AG04450 (cell line): ENCODE measurements at regions of chr5 and their contacts with region 1.

Region 1: GRCh38 chr5:126339215-126339805 is 83.9 kb upstream of the GRAMD2B start:
- DNase-seq: peak; percentile 30
- H3K4me3 ChIP-seq: no peak overlapping the region
- H3K27ac ChIP-seq: no peak overlapping the region
- H3K27me3 ChIP-seq: peaks cover 2% of the 10 kb centered on the region
- CTCF ChIP-seq: peak; percentile 79

Region 2: GRCh38 chr5:126354012-126354857 is 14.9 kb after region 1 on chr5:
- CTCF ChIA-PET with region 1: interaction called, 34 read pairs
- POLR2A ChIA-PET with region 1: no interaction called
- DNase-seq: peak; percentile 88
- H3K4me3 ChIP-seq: peak overlapping the region; percentile 44
- H3K27ac ChIP-seq: peak overlapping the region; percentile 57
- H3K27me3 ChIP-seq: no peaks in the 10 kb centered on the region
- CTCF ChIP-seq: peak; percentile 46

Region 3: DNA sequence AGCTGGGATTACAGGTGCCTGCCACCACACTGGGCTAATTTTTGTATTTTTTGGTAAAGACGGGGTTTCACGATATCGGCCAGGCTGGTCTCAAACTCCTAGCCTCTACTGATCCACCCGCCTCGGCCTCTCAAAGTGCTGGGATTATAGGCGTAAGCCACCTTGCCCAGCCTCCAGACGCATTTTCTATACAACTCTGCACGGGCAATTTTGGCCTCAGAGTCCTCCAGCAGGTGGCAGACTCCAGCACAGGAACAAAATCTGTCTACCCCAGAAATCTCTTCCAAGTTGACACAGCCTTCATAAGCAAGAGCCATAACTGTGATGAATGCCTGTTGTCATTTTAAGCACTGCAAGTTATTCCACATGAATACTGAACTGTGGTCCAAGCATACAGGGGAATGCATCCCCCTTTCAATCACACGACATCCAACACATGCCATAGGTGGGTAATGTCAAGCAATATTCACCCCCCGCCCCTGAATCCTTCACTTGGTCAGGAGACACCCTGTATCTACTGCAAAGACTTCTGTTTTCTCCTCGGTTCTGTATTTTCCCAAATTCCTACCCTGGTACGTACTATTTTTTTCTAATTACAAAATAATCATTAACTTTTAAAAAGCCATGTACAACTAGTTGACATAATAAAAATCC is 204.9 kb after region 1 on chr5:
- CTCF ChIA-PET with region 1: interaction called, 200 read pairs
- POLR2A ChIA-PET with region 1: interaction called, 10 read pairs
- DNase-seq: no peak
- H3K4me3 ChIP-seq: no peak overlapping the region
- H3K27ac ChIP-seq: no peak overlapping the region
- H3K27me3 ChIP-seq: no peaks in the 10 kb centered on the region
- CTCF ChIP-seq: peak; percentile 60

Region 4: DNA sequence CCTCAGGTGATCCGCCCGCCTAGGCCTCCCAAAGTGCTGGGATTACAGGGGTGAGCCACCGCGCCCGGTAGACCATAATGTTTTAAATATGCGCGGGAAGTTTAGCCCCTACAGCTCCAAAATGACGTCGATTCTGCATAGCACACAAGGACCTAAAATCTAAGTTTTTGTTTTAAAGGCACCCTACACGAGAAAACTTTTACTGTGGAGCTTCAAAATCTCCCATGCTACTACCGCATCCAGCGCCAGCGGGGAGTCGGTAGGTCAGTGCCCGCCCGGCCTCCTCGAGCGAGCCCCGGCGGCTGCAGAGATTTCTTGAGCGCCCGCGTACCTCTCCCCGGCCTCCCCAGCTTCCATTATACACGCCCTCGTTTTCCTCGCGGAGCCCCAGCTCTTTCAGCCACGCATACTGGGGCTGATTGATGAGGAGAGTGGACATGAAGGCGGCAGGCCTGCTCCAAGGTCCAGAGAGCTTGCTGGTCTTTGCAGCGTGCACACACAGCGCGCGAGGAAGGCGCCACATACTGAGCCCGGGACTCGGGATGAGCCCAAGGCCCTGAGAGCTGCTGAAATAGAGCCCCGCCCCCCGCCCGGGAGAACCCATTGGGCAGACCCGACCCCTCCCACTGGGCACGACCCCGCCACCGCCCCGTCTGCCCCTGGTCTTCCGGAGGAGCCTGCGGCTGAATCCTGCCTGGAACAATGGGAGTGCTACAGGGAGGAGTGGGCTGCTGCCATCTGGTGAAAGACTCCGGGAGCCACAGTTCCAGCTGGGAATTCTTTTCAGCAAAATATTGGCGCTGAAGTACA is 255.6 kb after region 1 on chr5 and contains the start of gene ALDH7A1:
- CTCF ChIA-PET with region 1: interaction called, 41 read pairs
- POLR2A ChIA-PET with region 1: no interaction called
- DNase-seq: peak; percentile 70
- H3K4me3 ChIP-seq: peak within 1 kb of the TSS; percentile 73
- H3K27ac ChIP-seq: peak within 1 kb of the TSS; percentile 87
- H3K27me3 ChIP-seq: no peaks in the 10 kb centered on the region
- CTCF ChIP-seq: peak; percentile 62
- polyA plus RNA-seq, gene ALDH7A1: 82.2 and 97.2 TPM in 2 replicates

Region 5: DNA sequence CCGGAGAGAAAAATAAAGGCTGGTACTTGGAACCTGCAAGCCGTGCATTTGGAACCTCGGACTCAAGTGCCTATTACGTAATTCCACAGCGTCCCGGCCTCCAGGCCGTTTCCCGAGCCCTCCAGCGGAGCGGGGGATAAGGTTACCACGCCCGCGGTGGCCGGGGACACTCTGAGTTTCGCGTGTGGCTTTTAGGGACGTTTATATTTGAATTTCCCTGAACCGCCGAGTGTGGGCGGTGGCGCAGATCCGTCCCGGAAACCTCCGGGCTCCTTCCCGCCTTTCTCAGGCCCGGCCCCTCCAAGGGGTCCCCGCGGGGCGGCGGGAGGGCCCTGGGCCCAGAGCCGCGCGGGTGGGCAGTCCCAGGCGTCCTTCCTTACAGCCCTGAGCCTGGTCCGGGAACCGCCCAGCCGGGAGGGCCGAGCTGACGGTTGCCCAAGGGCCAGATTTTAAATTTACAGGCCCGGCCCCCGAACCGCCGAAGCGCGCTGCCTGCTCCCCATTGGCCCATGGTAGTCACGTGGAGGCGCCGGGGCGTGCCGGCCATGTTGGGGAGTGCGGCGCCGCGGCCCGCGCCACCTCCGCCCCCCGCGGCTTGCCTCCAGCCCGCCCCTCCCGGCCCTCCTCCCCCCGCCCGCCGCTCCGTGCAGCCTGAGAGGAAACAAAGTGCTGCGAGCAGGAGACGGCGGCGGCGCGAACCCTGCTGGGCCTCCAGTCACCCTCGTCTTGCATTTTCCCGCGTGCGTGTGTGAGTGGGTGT is 437.4 kb after region 1 on chr5 and contains the start of gene LMNB1:
- CTCF ChIA-PET with region 1: interaction called, 16 read pairs
- POLR2A ChIA-PET with region 1: interaction called, 3 read pairs
- DNase-seq: peak; percentile 84
- H3K4me3 ChIP-seq: peak within 1 kb of the TSS; percentile 87
- H3K27ac ChIP-seq: peak within 1 kb of the TSS; percentile 85
- H3K27me3 ChIP-seq: no peaks in the 10 kb centered on the region
- CTCF ChIP-seq: no peak
- polyA plus RNA-seq, gene LMNB1: 11.9 and 17.2 TPM in 2 replicates